Spleen (tissue), 13 donors: ENCODE measurements at regions of chr1 and their contacts with region 1.

Region 1: GRCh38 chr1:9101510-9102146 is 27.3 kb downstream of the GPR157 start:
- DNase-seq: no peak
- H3K4me3 ChIP-seq: no peak overlapping the region
- H3K27ac ChIP-seq: no peak overlapping the region
- H3K4me1 ChIP-seq: peaks cover 0 to 6% (median 0%) of the 10 kb centered on the region in 6 donors
- H3K27me3 ChIP-seq: no peaks in the 10 kb centered on the region
- CTCF ChIP-seq: peak in 10 of 11 experiments; percentile 14 to 77 (median 57)
- POLR2A ChIP-seq: no peak

Region 2: GRCh38 chr1:8925406-8925805 is 176.2 kb before region 1 on chr1:
- intact Hi-C with region 1: loop called (anchors 10 kb)
- DNase-seq: no peak
- H3K4me3 ChIP-seq: no peak overlapping the region
- H3K27ac ChIP-seq: peak overlapping the region in 2 of 8 donors; percentile 39 to 40
- H3K4me1 ChIP-seq: peaks cover 0 to 8% (median 0%) of the 10 kb centered on the region in 6 donors
- H3K27me3 ChIP-seq: no peaks in the 10 kb centered on the region
- CTCF ChIP-seq: no peak
- POLR2A ChIP-seq: no peak

Region 3: DNA sequence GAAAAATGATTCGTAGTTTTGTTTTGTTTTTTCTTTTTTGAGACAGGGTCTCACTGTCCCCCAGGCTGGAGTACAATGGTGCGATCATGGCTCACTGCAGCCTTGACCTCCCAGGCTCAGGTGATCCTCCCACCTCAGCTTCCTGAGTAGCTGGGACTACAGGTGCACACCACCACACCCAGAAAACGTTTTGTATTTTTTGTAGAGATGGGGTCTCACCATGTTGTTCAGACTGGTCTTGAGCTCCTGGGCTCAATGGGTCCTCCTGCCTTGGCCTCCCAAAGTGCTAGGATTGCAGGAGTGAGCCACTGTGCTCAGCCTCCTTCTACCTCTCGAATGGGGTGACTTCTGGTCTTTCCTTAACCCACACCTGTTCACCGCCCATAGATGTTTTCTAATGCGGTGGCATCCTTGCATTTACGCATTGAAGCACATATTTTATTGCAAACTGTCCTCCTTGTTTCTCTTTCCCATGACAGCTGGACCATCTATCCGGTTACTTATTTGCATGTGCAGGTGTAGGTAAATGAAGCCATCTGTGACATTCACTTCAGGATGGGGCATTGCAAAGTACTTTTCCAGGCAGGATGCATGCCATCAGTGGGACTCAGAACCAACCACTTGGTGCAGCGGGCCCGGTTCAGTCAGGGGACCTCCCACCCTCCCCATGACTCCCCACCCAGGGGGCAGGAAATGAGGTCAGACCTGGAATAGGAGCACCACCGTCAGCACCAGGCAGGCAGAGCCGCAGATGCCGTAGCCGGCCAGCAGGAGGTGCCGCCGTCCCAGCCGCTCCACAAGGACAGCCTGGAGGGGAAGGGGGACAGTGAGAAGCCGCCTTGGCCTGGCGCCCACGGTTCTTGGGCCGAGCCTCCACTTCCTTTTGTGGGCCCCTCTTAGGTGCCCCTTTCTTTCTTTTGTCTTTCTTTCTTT is 91.9 kb before region 1 on chr1:
- intact Hi-C with region 1: loop called (anchors 5 kb)
- DNase-seq: peak; percentile 85
- H3K4me3 ChIP-seq: no peak overlapping the region
- H3K27ac ChIP-seq: no peak overlapping the region
- H3K4me1 ChIP-seq: peaks cover 7 to 49% (median 32%) of the 10 kb centered on the region in 6 donors
- H3K27me3 ChIP-seq: no peaks in the 10 kb centered on the region
- CTCF ChIP-seq: peak in 10 of 11 experiments; percentile 31 to 74 (median 65)
- POLR2A ChIP-seq: no peak